ENCODE measurements at regions of chr16 and their contacts with region 1.

Region 1: DNA sequence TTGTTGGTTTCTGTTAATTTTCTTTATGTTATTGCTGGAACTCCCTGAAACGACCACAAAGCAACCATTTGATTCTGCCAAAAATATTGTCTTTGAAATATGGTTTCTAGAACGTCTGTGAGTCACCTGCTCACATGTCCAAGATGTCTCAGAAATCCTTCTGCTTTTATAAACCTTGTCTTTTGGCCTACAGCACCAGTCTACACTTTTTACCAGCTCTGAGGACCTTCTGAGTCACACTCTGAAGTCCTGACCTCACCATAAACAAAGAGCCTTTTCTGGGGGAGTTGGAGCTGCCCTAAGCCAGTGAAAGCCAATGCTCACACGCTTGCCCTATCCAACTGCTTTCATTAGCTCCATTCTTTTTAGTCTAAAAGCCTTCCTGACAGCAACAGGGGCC is 55.5 kb downstream of the GRIN2A start:
- DNase-seq: no peak
- ATAC-seq: no peak
- H3K4me3 ChIP-seq: no peak overlapping the region
- H3K27ac ChIP-seq: no peak overlapping the region
- H3K4me1 ChIP-seq: no peaks in the 10 kb centered on the region
- H3K27me3 ChIP-seq: no peaks in the 10 kb centered on the region
- CTCF ChIP-seq: no peak
- POLR2A ChIP-seq: no peak

Region 2: GRCh38 chr16:10003486-10003885 is 123.2 kb before region 1 on chr16:
- in situ Hi-C with region 1: no loop called
- intact Hi-C with region 1: no loop called
- DNase-seq: no peak
- ATAC-seq: no peak
- H3K4me3 ChIP-seq: no peak overlapping the region
- H3K27ac ChIP-seq: no peak overlapping the region
- H3K4me1 ChIP-seq: no peaks in the 10 kb centered on the region
- H3K27me3 ChIP-seq: no peaks in the 10 kb centered on the region
- CTCF ChIP-seq: no peak
- POLR2A ChIP-seq: no peak

Region 3: GRCh38 chr16:10228546-10229178 is 102.0 kb after region 1 on chr16:
- in situ Hi-C with region 1: loop called in 1 of 4 experiments (anchors 25 kb)
- intact Hi-C with region 1: no loop called
- DNase-seq: no peak
- ATAC-seq: no peak
- H3K4me3 ChIP-seq: no peak overlapping the region
- H3K27ac ChIP-seq: no peak overlapping the region
- H3K4me1 ChIP-seq: peaks cover 0 to 2% of the 10 kb centered on the region in 2 donors
- H3K27me3 ChIP-seq: peaks cover 0 to 2% (median 0%) of the 10 kb centered on the region in 3 donors
- CTCF ChIP-seq: no peak
- POLR2A ChIP-seq: no peak